ENCODE measurements at regions of chr2 and their contacts with region 1.

Region 1: GRCh38 chr2:161063157-161063954 is 96.9 kb upstream of the TANK start:
- DNase-seq: peak; percentile 34
- H3K4me3 ChIP-seq: no peak overlapping the region
- H3K27me3 ChIP-seq: no peaks in the 10 kb centered on the region
- CTCF ChIP-seq: peak; percentile 87

Region 2: DNA sequence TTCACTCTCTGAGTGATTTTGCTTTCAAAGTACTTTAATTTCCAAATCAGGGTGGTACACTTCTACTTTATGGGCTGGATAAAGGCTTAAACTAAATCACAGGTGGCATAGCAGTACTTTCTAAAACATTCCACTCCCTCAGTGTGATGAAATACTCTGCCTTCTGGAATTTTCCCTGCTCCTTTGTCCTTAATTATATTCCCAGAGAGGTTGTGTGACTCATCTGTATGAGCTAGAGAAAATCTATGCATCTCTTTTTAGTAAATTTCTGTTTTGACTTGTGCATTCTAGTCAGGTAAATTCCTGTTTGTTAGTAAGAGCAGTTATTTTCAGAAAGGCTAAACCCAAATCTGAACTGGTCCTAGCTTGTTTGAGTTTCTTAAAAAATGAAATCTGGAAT is 972.0 kb before region 1 on chr2:
- CTCF ChIA-PET with region 1: interaction called, 11 read pairs
- POLR2A ChIA-PET with region 1: no interaction called
- DNase-seq: peak; percentile 32
- H3K4me3 ChIP-seq: no peak overlapping the region
- H3K27me3 ChIP-seq: no peaks in the 10 kb centered on the region
- CTCF ChIP-seq: no peak

Region 3: GRCh38 chr2:161004379-161004778 is 59.0 kb before region 1 on chr2:
- CTCF ChIA-PET with region 1: interaction called, 18 read pairs
- POLR2A ChIA-PET with region 1: no interaction called
- DNase-seq: no peak
- H3K4me3 ChIP-seq: no peak overlapping the region
- H3K27me3 ChIP-seq: no peaks in the 10 kb centered on the region
- CTCF ChIP-seq: peak; percentile 54

Region 4: DNA sequence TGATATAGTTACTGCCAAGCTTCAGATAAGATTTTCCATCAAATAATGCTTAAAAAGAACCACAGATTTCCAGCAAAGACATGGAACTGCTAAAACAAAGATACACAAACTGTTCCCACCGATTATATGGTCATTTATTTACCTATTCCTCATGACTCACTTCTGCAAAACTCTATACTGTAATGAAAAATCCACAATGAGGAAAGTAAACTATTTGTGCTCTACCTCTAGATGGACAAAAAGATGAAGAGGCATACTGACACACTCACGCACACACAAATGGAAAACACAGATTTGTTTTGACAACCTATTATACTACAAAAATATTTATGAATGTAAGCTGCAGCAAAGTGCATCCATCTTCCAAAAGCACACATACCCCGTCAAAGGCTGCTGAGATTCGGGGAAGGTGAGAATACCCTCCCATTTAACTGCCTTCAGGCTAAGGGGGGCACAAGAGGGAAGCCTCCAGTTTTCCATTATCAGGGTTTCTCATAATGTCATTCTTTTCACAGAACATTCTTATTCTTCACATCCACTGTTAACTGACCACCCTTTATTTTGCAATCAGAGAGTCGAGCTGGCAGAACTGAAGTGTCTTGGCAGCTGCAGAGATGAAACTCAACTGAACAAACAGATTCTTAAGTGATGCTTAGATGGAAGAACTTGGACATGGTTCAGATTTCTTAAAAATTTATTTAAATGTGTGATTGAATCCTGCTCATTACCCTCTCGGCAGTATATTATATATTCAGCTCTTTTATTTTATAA is 19.1 kb before region 1 on chr2:
- CTCF ChIA-PET with region 1: interaction called, 21 read pairs
- POLR2A ChIA-PET with region 1: no interaction called
- DNase-seq: no peak
- H3K4me3 ChIP-seq: no peak overlapping the region
- H3K27me3 ChIP-seq: 0 out of 2 replicates have a peak, but pooled peaks cover 1% of the 10 kb centered on the region
- CTCF ChIP-seq: no peak

Region 5: DNA sequence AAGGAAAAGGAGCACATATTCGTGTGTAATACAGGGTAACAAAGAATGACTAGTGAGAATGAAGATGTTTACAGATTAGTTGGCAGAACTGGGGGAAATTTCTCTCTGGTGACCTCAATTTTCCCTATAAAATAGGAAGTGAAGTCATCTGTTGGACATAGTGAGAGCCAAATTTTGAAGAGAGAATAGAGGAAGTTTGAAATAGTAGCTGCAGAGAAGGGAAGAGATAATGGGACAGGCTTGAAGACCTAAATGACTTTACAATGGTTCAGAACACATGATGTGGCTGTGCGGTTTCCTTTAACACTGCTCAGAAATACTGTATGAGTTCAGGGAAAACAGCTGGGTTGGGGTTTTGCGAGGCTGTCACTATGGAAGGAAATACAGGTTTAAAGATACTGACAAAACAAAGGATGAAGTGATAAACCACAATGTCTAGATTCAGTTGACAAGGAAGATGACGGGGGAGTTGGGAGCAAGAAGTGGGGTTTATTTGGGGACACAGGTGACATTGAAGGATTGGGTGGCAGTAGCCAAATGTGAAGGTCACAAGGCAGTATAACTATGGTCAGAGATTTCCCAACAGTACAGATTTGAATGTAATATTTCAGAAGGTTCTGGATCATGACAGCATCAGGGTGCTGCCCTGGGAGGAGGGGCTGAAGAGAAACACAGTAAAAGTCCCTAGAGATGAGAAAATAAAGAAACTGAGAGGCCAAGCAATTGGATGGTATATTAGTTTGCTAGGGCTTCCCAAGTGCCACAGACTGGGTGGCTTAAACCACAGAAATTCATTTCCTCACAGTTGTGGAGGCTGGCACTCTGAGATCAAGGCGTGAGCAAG is 14.2 kb after region 1 on chr2:
- CTCF ChIA-PET with region 1: interaction called, 26 read pairs
- POLR2A ChIA-PET with region 1: no interaction called
- DNase-seq: no peak
- H3K4me3 ChIP-seq: no peak overlapping the region
- H3K27me3 ChIP-seq: no peaks in the 10 kb centered on the region
- CTCF ChIP-seq: no peak

Region 6: DNA sequence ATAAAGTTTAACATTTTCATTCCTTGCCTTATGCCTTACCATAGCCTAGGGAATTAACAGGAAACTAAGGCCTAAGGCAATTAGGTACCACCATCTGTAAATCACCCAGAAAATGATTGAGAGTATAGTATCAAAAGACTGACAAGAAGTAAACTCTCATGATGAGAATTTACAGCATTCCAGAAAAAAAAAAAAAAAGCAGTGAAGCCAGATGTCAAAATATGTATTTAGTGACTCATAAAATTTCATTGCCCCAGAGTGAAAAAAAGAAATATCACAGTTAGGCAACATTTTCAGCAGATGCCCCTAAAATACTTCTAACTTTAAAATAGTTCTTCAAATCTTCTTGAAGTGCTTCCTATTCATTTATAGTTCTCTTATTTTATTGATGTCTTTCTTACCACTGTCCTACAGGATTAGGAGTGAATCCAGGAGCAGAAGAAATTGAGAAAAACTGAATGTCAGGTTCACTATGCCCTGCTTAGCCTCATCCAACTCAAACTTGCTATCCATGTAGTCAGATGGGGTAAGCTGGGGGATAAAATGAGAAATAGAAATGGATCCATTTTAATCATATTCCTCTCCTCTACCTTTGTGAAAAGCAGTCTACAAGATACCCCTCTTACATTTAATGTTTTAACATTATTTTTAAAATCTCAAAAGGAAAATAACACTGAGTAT is 39.6 kb after region 1 on chr2:
- CTCF ChIA-PET with region 1: interaction called, 4 read pairs
- POLR2A ChIA-PET with region 1: interaction called, 19 read pairs
- DNase-seq: no peak
- H3K4me3 ChIP-seq: no peak overlapping the region
- H3K27me3 ChIP-seq: 0 out of 2 replicates have a peak, but pooled peaks cover 2% of the 10 kb centered on the region
- CTCF ChIP-seq: no peak

Region 7: GRCh38 chr2:161122772-161123530 is 59.6 kb after region 1 on chr2:
- CTCF ChIA-PET with region 1: no interaction called
- POLR2A ChIA-PET with region 1: no interaction called
- DNase-seq: peak; percentile 89
- H3K4me3 ChIP-seq: no peak overlapping the region
- H3K27me3 ChIP-seq: no peaks in the 10 kb centered on the region
- CTCF ChIP-seq: no peak

Region 8: DNA sequence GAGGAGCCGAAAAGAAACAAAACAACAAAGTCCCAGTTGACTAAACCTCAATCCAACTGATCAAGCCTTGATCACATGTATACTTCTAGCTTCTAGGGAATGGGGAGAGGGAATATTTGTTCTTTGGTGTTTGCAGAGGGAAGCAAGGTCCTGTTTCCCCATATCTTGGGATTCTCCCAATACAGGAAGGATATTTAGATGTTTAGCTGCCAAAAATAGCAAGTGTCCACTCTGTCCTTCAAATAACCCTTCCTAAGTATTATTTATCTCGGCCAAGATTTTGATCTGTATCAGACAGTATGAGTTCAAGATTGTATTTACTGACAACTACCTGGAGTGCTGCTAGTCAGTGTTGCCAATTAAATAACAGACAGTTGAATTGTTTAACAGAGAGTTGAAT is 408.3 kb after region 1 on chr2:
- CTCF ChIA-PET with region 1: no interaction called
- POLR2A ChIA-PET with region 1: no interaction called
- DNase-seq: no peak
- H3K4me3 ChIP-seq: no peak overlapping the region
- H3K27me3 ChIP-seq: no peaks in the 10 kb centered on the region
- CTCF ChIP-seq: no peak